ENCODE measurements at regions of chr10 and their contacts with region 1.

Region 1: DNA sequence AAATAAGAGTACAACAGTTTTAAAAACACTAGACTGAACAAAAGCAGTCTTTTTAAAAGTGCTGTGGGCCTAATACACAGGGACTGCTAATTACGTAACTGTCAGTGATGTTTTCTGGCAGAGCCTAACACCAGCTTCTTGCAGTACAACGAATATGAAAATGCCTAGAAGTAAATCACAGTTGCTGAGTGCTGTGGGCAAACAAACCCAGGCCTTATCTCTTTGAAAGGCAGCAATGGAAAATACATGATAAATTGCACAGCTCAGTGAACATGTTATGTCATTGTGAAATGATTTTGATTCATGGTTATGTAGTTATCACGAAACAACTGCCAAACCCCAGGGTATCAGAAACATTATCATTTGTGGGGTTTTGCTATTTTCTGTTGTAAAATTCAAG is 428.4 kb downstream of the GFRA1 start:
- DNase-seq: no peak
- H3K4me3 Mint-ChIP-seq: no peak overlapping the region
- H3K27ac Mint-ChIP-seq: no peak overlapping the region
- H3K4me1 Mint-ChIP-seq: no peaks in the 10 kb centered on the region
- H3K27me3 Mint-ChIP-seq: no peaks in the 10 kb centered on the region

Region 2: GRCh38 chr10:115773832-115774231 is 70.8 kb before region 1 on chr10:
- intact Hi-C with region 1: loop called (anchors 2 kb)
- DNase-seq: no peak
- H3K4me3 Mint-ChIP-seq: no peak overlapping the region
- H3K27ac Mint-ChIP-seq: no peak overlapping the region
- H3K4me1 Mint-ChIP-seq: no peaks in the 10 kb centered on the region
- H3K27me3 Mint-ChIP-seq: no peaks in the 10 kb centered on the region

Region 3: DNA sequence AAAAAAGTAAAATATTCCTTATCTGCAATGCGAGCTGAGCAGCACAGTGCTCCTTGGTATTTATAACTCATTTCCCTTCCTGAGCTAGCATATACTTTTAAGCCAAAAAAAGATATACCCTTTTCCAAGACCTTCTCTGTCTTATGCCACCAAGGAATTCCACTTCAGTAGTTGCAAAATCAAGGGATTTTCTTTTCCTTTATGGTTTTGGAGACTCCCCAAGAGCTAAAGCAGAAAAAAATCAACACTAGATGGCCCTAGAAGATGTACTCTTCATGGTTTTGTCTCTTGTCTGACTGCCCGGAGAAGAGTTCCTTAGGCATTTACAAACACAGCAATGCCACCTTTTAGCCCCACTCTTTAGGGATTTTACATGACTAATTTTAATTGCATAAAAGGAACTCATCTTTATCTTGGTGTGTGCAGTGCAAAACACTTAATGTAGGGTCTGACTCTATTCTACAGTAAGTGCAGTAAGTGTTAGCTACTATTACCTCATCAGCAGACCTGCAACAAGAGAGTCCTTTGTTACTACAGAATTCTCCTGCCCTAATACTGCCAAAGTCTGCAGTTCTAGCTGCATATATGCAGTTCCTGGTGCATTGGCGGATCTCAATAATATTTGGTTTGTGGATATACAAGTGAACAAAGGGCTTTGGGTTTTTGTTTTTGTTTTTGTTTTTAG is 14.9 kb before region 1 on chr10:
- intact Hi-C with region 1: no loop called
- DNase-seq: no peak
- H3K4me3 Mint-ChIP-seq: no peak overlapping the region
- H3K27ac Mint-ChIP-seq: no peak overlapping the region
- H3K4me1 Mint-ChIP-seq: no peaks in the 10 kb centered on the region
- H3K27me3 Mint-ChIP-seq: peaks cover 2% of the 10 kb centered on the region

Measured in activated T-helper 1 cell treated with anti-CD3 and anti-CD28 coated beads, Interleukin-12 subunit alpha, Interleukin-12 subunit beta, Interleukin-2, Interleukin-4 antibody, amounts not matched to agents 30 ng/mL and 10 ng/mL and 1 ng/mL, durations not matched to agents 14 hours and 24 hours and 36 hours (primary cell).